Esophagus squamous epithelium (tissue), 5 donors: ENCODE measurements at regions of chr9 and their contacts with region 1.

Region 1: DNA sequence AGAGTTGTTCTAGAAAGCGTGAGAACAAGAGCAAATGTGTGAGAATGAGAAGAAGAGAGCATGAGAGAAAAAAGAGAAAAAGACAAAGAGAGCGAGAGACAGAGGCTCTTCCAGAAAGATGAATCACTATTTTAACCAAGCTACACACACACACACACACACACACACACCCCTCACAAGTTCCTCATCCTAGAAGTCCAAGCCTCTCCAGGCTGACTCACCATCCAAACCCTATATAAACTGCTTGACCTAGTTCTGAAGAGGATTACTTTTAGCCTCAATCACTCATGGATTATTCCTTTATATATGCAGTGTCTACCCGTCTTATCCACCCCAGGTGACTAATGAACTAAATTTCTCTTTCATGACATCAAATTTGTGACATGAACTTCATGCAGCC is 37.6 kb downstream of the C9orf57 start:
- DNase-seq: no peak
- H3K4me3 ChIP-seq: no peak overlapping the region
- H3K27ac ChIP-seq: peak overlapping the region in 3 of 4 donors; percentile 53 to 78 (median 57)
- H3K4me1 ChIP-seq: peaks cover 0 to 22% (median 0%) of the 10 kb centered on the region in 3 donors
- H3K27me3 ChIP-seq: no peaks in the 10 kb centered on the region
- CTCF ChIP-seq: no peak
- POLR2A ChIP-seq: no peak

Region 2: GRCh38 chr9:71806901-71807307 is 215.9 kb before region 1 on chr9:
- intact Hi-C with region 1: loop called (anchors 5 kb)
- DNase-seq: no peak
- H3K4me3 ChIP-seq: no peak overlapping the region
- H3K27ac ChIP-seq: no peak overlapping the region
- H3K4me1 ChIP-seq: peaks cover 0 to 6% (median 0%) of the 10 kb centered on the region in 3 donors
- H3K27me3 ChIP-seq: no peaks in the 10 kb centered on the region
- CTCF ChIP-seq: peak; percentile 72 to 91 (median 84)
- POLR2A ChIP-seq: no peak

Region 3: GRCh38 chr9:72092820-72093219 is 70.0 kb after region 1 on chr9:
- intact Hi-C with region 1: no loop called
- DNase-seq: no peak
- H3K4me3 ChIP-seq: no peak overlapping the region
- H3K27ac ChIP-seq: no peak overlapping the region
- H3K4me1 ChIP-seq: no peaks in the 10 kb centered on the region
- H3K27me3 ChIP-seq: no peaks in the 10 kb centered on the region
- CTCF ChIP-seq: no peak
- POLR2A ChIP-seq: no peak